HepG2 (cell line): ENCODE measurements at regions of chr13 and their contacts with region 1.

Region 1: GRCh38 chr13:51746802-51747201 is 57.2 kb downstream of the DHRS12 start:
- DNase-seq: no peak
- ATAC-seq: no peak
- H3K4me3 ChIP-seq: no peak overlapping the region
- H3K27ac ChIP-seq: peak overlapping the region; percentile 77
- H3K4me1 ChIP-seq: peaks cover 40% of the 10 kb centered on the region
- H3K27me3 ChIP-seq: no peaks in the 10 kb centered on the region
- CTCF ChIP-seq: no peak
- EP300 ChIP-seq: no peak
- POLR2A ChIP-seq: no peak
- RAD21 ChIP-seq: no peak

Region 2: DNA sequence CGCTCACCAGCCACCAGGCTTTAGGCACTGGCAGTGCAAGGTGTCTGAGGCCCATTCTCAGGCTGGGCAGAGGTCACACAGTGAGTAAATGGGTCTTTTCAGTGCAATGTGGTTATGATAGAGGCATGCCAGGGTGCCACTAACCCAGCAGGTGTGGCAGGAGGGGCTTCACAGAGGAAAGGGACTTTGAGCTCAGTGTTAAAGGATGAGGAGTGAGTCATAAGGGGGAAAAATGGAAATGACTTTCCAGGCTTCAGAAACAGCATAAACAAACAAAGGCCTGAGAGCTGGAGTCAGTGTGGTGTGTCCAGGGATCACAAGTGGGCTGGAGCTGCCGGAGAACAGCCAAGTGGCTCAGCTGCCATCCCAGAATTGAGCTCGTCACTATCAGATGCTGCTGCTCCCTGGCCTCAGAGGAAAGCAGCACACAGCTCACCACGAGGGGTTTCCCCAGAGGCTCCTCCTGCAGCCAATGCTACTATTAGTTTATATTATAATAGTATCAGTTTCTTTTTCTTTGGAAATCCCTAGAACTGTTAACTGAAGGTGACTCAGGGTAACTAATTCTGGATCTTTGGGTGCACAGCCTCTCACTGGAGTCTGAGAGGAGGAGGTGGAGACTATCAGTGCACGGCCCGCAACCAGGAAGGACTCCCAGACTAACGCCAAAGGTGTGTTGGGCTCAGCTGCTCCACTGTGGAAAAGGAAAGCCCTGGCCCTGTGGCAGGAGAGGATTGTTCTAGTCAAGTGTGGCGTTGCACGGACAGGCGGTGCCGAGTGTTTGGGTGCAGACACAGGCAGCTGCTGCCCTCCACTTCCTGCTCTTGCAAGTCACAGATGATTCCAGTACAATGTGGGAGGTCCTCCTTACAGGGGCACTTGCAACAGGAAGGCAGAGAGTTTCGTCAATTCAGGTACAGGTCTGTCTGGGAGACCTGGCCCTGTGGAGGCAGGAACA is 17.7 kb after region 1 on chr13:
- CTCF ChIA-PET with region 1: no interaction called
- POLR2A ChIA-PET with region 1: interaction called, 4 read pairs
- in situ Hi-C with region 1: no loop called
- intact Hi-C with region 1: loop called (anchors 2 kb)
- DNase-seq: peak; percentile 92
- ATAC-seq: peak; percentile 92
- H3K4me3 ChIP-seq: peak overlapping the region in 1 of 3 experiments; percentile 26; a peak in 2 of 6 replicates
- H3K27ac ChIP-seq: peak overlapping the region; percentile 63
- H3K4me1 ChIP-seq: peaks cover 26% of the 10 kb centered on the region
- H3K27me3 ChIP-seq: no peaks in the 10 kb centered on the region
- CTCF ChIP-seq: no peak
- EP300 ChIP-seq: peak in 1 of 2 experiments; percentile 58; a peak in 2 of 4 replicates
- POLR2A ChIP-seq: peak in 1 of 2 experiments; percentile 40; a peak in 1 of 4 replicates
- RAD21 ChIP-seq: peak; percentile 50; the same call in 1 of the 2 replicates